ENCODE measurements at regions of chr9 and their contacts with region 1.

Region 1: DNA sequence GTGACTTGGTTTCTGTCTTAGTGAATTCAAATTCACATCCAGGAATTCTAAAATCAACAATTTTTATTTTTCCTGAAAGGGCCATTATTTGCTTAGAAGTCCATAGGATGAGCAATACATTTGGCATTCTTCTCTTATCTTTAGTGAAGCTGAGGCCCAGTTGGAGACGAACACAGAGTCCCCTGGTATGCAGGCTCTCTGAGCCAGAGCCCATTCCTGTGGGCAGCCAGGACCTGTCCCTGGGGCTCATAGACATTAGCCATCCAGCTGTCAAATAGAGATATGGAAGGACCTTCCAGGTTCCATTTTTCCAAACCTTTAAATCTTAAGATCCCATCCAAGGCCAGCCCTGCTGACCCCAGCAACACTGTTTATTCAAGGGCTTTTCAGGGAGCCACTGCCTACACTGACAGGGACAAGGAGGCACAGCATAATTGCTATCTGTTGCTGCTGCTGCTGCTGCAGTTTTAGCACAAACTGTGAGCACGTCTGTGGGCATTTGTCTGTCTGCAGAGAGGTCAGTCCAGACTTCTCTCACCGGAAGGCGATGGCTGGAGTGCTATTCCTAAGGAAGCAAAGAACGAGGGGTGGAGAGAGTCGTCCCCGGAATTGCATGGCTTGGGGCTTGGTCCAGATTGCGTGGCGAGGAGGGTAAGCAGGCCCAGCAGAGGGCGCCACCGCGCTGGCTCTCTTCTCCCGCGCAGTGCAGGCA is 639.0 kb downstream of the CCDC171 start:
- DNase-seq: peak; percentile 60
- H3K4me3 ChIP-seq: no peak overlapping the region
- H3K27ac ChIP-seq: no peak overlapping the region
- H3K4me1 ChIP-seq: peaks cover 5% of the 10 kb centered on the region
- H3K27me3 ChIP-seq: no peaks in the 10 kb centered on the region
- CTCF ChIP-seq: peak; percentile 79 to 95
- POLR2A ChIP-seq: no peak

Region 2: GRCh38 chr9:15873569-15874177 is 318.2 kb before region 1 on chr9:
- CTCF ChIA-PET with region 1: no interaction called
- POLR2A ChIA-PET with region 1: no interaction called
- dilution Hi-C with region 1: no loop called
- intact Hi-C with region 1: loop called (anchors 5 kb)
- DNase-seq: peak; percentile 55
- H3K4me3 ChIP-seq: no peak overlapping the region
- H3K27ac ChIP-seq: no peak overlapping the region
- H3K4me1 ChIP-seq: no peaks in the 10 kb centered on the region
- H3K27me3 ChIP-seq: no peaks in the 10 kb centered on the region
- CTCF ChIP-seq: peak; percentile 25 to 33
- POLR2A ChIP-seq: no peak

Region 3: DNA sequence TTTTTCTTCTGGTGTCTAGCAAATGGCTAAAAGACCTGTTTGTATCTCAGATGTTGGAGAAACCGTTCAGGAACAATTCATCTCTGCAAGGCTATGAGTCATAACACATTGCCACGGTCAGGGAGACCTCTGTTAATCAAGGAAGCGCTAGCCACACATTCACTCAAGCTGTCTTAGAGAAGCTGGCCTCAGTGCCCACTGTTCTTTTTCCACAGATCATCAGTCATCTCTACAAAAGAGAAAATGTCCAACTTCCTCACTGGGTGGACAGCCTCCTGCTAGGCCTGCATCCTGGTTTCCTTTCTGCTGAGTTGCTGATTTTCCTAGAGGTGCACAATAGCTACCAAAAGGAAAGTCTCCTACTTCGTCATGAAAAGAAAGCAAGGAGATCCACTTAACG is 318.1 kb after region 1 on chr9:
- CTCF ChIA-PET with region 1: interaction called, 3 read pairs
- POLR2A ChIA-PET with region 1: no interaction called
- dilution Hi-C with region 1: no loop called
- intact Hi-C with region 1: loop called (anchors 5 kb)
- DNase-seq: peak; percentile 86
- H3K4me3 ChIP-seq: peak overlapping the region in 2 of 3 experiments; percentile 12 to 57
- H3K27ac ChIP-seq: peak overlapping the region; percentile 85
- H3K4me1 ChIP-seq: peaks cover 33% of the 10 kb centered on the region
- H3K27me3 ChIP-seq: no peaks in the 10 kb centered on the region
- CTCF ChIP-seq: no peak
- POLR2A ChIP-seq: no peak

Region 4: GRCh38 chr9:16626577-16627131 is 434.8 kb after region 1 on chr9:
- CTCF ChIA-PET with region 1: no interaction called
- POLR2A ChIA-PET with region 1: no interaction called
- dilution Hi-C with region 1: no loop called
- intact Hi-C with region 1: loop called (anchors 1 kb)
- DNase-seq: peak; percentile 86
- H3K4me3 ChIP-seq: peak overlapping the region in 1 of 3 experiments; percentile 20
- H3K27ac ChIP-seq: peak overlapping the region; percentile 87
- H3K4me1 ChIP-seq: peaks cover 50% of the 10 kb centered on the region
- H3K27me3 ChIP-seq: no peaks in the 10 kb centered on the region
- CTCF ChIP-seq: no peak
- POLR2A ChIP-seq: no peak

Region 5: DNA sequence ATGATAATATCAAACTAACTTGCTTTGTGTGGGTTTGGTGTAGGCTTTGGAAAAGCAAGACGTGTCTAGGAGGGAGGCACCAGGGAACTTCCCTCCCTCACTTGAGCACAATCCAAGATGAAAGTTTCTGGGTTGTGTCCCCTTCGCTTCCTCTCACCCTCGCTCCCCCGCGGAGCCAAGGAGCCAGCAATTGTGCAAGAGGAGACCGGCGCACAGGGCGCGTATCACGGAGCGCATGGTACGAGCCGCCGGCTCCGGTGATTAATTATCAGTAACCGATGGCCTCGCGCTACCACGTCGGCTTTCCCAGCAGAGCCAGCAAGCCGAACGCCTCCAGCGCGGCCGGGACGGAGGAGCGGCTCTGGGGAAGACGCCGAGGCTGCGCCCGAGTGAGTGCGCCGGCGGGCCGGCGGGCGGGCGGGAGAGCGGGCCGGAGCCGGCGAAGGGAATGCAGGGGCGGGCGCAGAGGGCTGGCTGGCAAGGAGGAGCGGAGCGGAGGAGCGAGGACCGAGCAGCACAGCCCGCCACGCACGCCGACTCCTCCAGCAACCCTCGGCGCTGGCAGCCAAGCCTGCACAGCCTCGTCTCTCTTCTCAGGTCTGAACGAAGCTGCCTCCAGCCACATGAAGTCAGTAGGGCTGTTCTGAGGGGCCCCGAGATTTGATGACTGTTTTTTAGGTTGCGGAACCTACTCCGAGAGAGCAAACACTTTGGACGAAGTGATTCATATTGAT is 535.0 kb after region 1 on chr9:
- CTCF ChIA-PET with region 1: interaction called, 6 read pairs
- POLR2A ChIA-PET with region 1: no interaction called
- dilution Hi-C with region 1: no loop called
- intact Hi-C with region 1: loop called (anchors 1 kb)
- DNase-seq: peak; percentile 84
- H3K4me3 ChIP-seq: peak overlapping the region; percentile 66 to 94 (median 84)
- H3K27ac ChIP-seq: peak overlapping the region; percentile 93
- H3K4me1 ChIP-seq: peaks cover 26% of the 10 kb centered on the region
- H3K27me3 ChIP-seq: no peaks in the 10 kb centered on the region
- CTCF ChIP-seq: no peak
- POLR2A ChIP-seq: peak; percentile 62

Region 6: DNA sequence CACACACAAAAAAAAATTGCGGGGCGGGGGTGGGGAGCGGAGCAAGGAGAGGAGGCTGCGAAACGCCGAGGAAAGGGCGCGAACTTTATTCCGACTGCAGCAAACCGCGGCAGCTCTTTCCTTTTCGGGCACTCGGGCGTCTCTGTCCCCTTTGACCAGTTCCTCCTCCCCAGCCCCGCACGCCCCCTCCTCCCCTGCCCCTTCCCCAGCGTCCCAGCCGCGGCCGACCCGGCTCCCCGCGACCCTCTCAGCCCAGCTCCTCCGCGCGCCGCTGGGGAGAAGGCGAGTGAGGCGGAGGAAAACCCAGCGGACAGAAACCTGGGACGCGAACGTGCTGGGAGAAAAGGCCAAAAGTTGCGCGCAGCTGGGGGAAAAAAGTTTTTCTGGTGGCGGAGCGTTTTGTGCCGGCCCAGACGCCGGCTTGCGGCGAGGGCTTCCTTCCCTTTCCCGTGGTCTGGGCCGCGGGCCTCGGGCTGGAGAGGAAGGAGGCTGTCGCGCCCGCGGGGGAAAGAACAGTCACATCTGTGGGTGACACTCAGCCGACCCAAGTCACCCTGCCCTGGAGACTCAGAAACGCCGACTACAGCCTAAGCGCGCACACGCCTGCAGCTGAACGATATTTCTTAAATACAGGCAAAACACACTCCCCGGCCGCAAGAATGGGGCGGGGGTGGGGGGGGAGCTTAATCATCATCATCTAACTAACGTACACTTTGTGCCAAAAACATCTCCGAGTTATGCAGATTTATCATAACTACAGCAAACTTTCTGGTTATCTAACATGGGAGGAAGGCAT is 679.7 kb after region 1 on chr9:
- CTCF ChIA-PET with region 1: no interaction called
- POLR2A ChIA-PET with region 1: no interaction called
- dilution Hi-C with region 1: no loop called
- intact Hi-C with region 1: loop called (anchors 2 kb)
- DNase-seq: peak; percentile 59
- H3K4me3 ChIP-seq: peak overlapping the region; percentile 81 to 98 (median 88)
- H3K27ac ChIP-seq: peak overlapping the region; percentile 17
- H3K4me1 ChIP-seq: peaks cover 14% of the 10 kb centered on the region
- H3K27me3 ChIP-seq: peaks cover 2 to 3% of the 10 kb centered on the region in 2 experiments
- CTCF ChIP-seq: no peak
- POLR2A ChIP-seq: no peak

Region 7: GRCh38 chr9:17063535-17064135 is 871.8 kb after region 1 on chr9:
- CTCF ChIA-PET with region 1: no interaction called
- POLR2A ChIA-PET with region 1: no interaction called
- dilution Hi-C with region 1: no loop called
- intact Hi-C with region 1: loop called (anchors 2 kb)
- DNase-seq: peak; percentile 61
- H3K4me3 ChIP-seq: no peak overlapping the region
- H3K27ac ChIP-seq: no peak overlapping the region
- H3K4me1 ChIP-seq: peaks cover 15% of the 10 kb centered on the region
- H3K27me3 ChIP-seq: no peaks in the 10 kb centered on the region
- CTCF ChIP-seq: peak; percentile 65 to 72
- POLR2A ChIP-seq: no peak